GM10248 (cell line): ENCODE measurements at regions of chr22 and their contacts with region 1.

Region 1: DNA sequence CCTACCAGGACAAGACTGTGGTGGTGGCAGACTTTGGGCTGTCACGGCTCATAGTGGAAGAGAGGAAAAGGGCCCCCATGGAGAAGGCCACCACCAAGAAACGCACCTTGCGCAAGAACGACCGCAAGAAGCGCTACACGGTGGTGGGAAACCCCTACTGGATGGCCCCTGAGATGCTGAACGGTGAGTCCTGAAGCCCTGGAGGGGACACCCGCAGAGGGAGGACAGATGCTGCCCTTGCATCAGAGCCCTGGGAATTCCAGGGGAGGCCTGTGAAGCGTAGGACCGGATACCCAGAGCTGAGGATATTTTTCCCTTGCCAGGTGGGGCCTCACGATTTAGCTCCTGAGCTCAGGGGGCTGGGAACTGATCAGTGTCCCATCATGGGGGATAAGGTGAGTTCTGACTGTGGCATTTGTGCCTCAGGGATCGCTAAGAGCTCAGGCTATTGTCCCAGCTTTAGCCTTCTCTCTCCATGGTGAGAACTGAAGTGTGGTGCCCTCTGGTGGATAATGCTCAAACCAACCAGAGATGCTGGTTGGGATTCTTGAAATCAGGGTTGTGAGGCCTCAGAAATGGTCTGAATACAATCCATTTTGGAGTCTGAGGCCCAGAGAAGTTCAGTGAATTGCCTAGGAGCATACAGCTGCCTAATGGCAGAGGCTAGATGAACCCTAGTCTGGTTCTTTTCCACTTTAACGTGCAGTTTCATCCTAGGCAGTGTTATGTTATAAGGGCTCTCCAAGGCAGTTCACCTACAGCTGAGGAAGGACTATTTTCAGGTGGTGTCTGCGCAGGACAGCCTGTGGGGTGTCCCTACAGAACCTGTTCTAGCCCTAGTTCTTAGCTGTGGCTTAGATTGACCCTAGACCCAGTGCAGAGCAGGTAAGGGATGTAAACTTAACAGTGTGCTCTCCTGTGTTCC is 19.5 kb downstream of the PIK3IP1 start:
- DNase-seq: peak; percentile 68
- CTCF ChIP-seq: peak; percentile 71

Region 2: DNA sequence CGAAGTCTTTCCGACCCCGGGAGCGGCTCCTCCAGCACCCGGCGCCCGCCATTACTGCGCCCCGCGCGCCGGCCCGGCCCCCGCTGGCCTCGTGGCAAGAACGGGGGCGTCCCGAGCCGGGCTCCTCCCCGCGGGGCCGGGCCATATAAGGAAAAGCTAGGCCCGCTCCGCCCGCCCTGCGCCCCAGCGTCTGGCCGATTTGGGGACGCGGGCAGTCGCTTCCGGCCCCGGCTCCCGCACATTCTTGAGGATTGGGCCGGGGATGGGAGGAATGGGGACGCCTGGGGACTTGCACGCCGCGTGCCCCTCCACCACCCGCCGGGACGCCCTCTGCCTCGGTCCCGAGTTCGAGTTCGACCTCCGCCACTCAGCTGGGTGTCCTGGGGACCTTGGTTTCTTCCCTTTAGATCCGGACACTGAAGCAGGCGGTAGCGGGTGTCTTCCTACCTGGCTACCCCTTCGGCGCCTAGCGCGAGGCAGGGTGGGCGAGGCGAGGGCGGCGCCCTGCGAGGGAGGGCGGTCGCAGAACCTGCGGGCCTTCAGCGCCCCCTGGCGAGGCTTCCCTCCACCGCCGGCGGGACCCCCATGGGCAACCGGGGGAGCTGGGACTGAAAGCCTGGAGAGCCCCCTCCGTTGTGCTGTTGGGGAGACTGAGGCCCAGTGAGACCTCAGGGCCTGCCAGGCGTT is 187.8 kb before region 1 on chr22:
- CTCF ChIA-PET with region 1: interaction called, 11 read pairs
- POLR2A ChIA-PET with region 1: no interaction called
- DNase-seq: peak; percentile 94
- CTCF ChIP-seq: peak; percentile 87

Region 3: GRCh38 chr22:31211862-31212730 is 60.7 kb before region 1 on chr22 and contains the start of gene LIMK2:
- CTCF ChIA-PET with region 1: interaction called, 71 read pairs
- POLR2A ChIA-PET with region 1: no interaction called
- DNase-seq: peak; percentile 98
- CTCF ChIP-seq: peak; percentile 92

Region 4: GRCh38 chr22:31230871-31231621 is 41.7 kb before region 1 on chr22:
- CTCF ChIA-PET with region 1: interaction called, 11 read pairs
- POLR2A ChIA-PET with region 1: no interaction called
- DNase-seq: peak; percentile 51
- CTCF ChIP-seq: peak; percentile 78

Region 5: DNA sequence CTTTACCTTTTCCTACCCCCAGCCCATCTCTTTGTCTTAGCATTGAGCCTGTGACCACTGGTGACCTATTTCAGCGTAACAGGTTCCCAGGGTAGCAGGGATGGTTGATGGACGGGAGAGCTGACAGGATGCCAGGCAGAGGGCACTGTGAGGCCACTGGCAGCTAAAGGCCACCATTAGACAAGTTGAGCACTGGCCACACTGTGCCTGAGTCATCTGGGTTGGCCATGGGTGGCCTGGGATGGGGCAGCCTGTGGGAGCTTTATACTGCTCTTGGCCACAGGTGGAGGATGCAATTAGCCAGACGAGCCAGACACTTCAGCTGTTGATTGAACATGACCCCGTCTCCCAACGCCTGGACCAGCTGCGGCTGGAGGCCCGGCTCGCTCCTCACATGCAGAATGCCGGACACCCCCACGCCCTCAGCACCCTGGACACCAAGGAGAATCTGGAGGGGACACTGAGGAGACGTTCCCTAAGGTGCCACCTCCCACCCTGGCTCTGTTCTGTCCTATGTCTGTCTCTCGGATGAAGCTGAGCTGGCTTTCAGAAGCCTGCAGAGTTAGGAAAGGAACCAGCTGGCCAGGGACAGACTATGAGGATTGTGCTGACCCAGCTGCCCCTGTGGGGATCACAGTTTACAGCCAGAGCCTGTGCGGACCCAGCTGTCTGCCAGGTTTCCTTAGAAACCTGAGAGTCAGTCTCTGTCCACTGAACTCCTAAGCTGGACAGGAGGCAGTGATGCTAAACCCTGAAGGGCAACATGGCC is 10.3 kb before region 1 on chr22:
- CTCF ChIA-PET with region 1: interaction called, 36 read pairs
- POLR2A ChIA-PET with region 1: no interaction called
- DNase-seq: no peak
- CTCF ChIP-seq: no peak

Region 6: DNA sequence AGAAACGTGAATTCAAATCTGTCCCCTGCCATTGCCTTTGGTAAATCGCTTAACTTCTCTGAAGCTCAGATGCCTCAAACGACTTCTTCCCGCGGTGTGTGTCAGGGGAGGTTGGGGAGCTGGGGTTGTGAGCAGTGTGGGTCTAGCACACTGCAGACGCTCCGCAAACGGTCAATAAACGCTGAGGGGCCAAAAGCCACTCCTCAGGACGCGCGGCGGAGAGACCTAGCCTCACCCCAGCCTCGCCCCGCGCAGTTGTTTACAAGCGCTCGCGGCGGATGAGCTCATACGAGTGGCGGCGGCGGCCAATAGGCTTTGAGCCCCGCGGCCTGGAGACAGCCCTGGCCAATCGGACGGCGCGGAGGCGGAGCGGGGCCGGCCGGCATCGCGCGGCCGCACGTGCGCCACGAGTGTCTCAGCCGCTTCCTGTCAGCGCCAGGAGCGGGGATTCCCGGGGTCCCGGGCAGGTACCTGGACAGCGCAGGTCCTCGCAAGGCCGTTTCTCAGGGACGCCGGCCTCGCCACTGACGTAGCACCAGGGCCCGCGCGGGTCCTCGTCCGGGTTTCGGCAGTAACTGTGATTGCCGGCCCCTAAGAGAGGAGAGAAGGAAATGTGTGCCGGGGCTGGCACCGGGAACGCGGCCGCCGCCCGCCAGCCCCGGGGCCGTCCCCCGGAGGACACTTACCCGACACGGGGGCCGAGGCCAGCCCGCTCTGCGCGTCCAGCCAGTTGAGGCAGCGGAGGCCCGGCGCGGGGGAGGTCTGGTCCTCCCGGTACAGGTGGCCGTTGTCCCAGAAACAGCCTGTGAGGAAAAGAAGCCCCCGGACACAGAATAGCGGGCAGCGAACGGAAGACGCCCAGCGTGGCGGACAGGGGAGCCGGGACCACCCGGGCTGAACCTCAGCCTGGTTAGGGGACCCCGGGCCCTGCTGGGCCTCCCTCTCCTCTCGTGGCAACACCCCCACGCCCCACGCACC is 18.0 kb after region 1 on chr22:
- CTCF ChIA-PET with region 1: interaction called, 20 read pairs
- POLR2A ChIA-PET with region 1: no interaction called
- DNase-seq: peak; percentile 96
- CTCF ChIP-seq: no peak

Region 7: DNA sequence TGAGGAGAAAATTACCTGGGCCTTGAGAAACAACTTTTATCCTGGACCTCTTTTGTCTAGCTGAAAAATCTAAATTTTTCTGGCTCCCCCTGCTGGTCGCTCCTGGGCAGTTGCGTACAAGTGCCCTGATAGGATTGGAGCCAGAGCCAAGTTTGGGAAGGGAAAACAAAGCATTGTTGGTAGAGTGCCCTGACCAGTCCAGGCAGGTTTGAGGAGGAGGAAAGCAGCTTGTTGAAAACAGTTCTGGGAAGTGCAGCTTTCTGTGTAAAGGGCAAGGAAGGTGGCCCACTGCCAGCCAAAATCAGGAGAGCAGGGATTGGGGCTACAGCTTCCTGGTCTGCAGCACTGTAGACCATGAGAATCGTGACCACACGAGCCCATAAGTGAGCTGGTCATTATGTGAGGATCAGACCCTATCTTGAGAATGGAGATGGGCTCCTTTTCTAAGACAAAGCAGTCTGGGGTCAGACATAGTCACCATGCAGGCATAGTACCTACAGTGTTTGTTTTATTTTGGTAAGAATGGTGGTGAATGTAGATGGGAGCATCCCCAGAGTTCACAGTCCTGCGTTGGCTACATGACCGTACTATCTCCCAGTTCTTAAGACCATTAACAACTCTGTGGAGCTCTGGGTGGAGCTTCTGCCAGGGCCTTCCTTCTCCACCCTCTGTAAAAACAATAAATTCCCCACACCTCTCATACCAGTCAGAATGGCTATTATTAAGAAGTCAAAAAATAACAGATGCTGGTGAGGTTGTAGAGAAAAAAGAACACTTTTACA is 40.8 kb after region 1 on chr22:
- CTCF ChIA-PET with region 1: interaction called, 15 read pairs
- POLR2A ChIA-PET with region 1: no interaction called
- DNase-seq: peak; percentile 65
- CTCF ChIP-seq: peak; percentile 89

Region 8: DNA sequence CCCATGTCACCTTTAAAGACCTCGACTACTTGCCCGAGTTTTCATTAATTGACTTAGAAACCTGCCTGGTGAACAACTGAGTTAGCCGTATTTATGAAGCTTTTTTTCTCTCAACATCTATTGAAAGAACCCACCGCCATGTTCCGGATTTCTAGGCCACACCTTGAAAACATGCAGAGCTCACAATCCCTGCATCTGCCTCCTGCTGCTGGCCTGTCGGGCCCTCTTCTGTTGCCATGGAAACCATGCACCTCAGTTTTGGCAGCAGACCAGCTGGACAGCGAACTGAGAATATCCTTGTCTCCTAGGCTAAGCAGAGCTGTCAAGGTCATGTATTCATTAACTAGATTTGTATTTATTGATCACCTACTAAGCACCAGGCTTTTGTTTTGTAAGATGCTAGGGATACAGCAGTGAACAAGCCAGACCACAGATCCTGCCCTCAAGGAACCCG is 77.7 kb after region 1 on chr22:
- CTCF ChIA-PET with region 1: no interaction called
- POLR2A ChIA-PET with region 1: no interaction called
- DNase-seq: no peak
- CTCF ChIP-seq: no peak

Region 9: GRCh38 chr22:31465307-31465706 is 192.5 kb after region 1 on chr22:
- CTCF ChIA-PET with region 1: no interaction called
- POLR2A ChIA-PET with region 1: no interaction called
- DNase-seq: no peak
- CTCF ChIP-seq: no peak

Region 10: DNA sequence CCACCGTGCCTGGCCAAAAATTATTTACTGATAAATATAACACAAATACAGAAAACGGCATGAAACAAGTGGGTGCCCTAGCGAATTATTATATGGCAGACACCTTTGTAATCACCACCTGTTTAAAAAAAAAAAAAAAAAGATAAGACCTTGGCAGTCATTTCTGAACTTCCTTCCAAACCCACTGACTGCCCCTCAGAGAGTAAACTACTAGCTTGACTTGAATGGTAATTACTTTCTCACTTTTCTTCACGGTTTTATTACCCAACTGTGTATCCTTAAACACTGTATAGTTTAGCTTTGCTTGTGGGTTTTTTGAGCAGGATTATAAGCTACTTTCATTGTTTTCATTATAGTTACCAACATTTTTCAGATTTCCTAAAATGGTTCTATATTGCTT is 247.3 kb after region 1 on chr22:
- CTCF ChIA-PET with region 1: no interaction called
- POLR2A ChIA-PET with region 1: no interaction called
- DNase-seq: peak; percentile 29
- CTCF ChIP-seq: no peak

Region 11: GRCh38 chr22:31749636-31750364 is 477.0 kb after region 1 on chr22 and contains the start of gene PRR14L:
- CTCF ChIA-PET with region 1: no interaction called
- POLR2A ChIA-PET with region 1: no interaction called
- DNase-seq: peak; percentile 94
- CTCF ChIP-seq: no peak